Posterior cingulate gyrus (tissue), 11 donors: ENCODE measurements at regions of chr17 and their contacts with region 1.

Region 1: GRCh38 chr17:33674685-33675084 is 381.6 kb upstream of the ASIC2 start:
- DNase-seq: peak in 9 of 10 donors; percentile 43 to 95 (median 70)

Region 2: DNA sequence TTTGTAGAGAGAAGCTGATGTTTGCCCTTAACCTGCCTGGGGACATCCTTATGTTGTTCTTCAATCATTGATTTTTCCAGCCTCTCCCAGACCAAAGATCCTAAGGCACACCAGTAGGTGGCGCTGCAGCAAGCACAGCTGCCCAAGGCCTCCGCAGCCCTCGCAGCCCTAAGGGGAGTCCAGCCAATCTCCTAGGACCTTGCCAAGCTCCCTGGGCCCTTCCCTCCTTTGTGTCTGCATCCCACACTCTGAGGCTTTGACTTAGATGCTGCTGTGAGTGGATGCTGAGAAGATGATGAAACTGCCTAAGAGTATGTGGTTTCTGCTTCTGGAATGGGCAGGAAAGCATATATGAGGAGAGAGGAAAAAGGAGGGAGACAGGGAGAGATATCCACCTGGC is 635.9 kb before region 1 on chr17:
- intact Hi-C with region 1: loop called (anchors 10 kb)
- DNase-seq: peak in 7 of 10 donors; percentile 28 to 95 (median 59)

Region 3: GRCh38 chr17:33520426-33521330 is 154.0 kb before region 1 on chr17:
- intact Hi-C with region 1: no loop called
- DNase-seq: peak; percentile 21 to 89 (median 60)

Region 4: DNA sequence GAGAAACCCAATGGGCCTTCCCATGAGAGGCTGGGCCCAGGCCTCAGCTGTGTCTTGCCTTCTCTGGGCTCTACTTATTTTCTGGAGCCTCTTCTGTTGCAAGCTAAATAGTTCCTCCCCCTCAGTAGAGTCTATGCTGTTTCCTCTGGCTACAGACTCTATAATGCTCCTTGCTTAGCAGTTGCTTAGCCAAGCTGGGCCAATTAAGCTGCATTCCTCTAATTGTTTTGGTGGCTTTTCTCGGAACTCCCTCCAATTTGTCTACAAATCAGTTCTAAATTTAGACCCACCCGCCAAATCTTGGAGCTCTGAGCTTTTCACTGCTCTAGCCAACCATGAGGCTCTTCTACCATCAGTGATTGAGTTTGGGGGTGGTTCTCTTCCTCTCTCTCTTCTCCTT is 78.9 kb before region 1 on chr17:
- intact Hi-C with region 1: no loop called
- DNase-seq: peak in 1 of 10 donors; percentile 9

Region 5: GRCh38 chr17:33712120-33712519 is 37.4 kb after region 1 on chr17:
- intact Hi-C with region 1: no loop called
- DNase-seq: no peak